ENCODE measurements at regions of chr1 and their contacts with region 1.

Region 1: DNA sequence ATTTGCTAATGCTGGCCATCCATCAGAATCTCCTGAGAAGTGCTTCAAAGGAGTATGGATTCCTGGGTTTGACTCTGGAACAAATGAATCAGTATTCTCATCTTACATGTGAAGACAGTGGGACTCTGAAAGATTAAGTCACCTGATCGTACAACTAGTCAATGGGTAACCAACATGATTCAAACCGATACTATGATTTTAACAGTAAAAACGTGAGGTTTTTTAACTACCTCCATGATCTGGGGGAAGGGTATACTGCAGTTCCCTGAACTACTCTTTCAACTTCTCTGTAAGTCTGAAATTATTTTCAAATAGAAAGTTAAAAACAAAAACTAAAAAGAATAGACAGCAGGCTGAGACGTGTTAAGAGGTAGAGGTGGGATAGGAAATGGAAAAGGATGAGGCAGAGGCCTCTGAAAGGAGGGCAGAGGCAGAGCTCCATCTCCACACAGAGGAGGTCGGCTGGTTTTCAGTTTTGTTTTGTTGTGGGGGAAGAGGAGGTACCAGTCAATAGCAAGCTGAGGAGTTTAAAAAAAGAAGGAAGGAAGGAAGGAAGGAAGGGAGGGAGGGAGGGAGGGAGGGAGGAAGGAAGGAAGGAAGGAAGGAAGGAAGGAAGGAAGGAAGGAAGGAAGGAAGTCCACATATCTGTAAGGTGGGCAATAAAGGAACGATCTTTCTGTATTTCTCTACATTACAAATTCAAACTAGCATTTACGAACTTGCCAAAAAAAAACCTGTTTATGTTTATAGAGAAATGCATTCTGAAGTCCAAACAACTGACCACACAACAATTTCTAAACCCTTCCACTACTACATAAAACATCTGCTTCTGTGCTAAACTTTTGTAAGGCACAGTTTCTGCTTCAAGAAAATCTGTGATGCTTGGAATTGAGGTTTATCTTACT is 213.1 kb downstream of the RERE start:
- DNase-seq: peak; percentile 76
- ATAC-seq: peak; percentile 85
- H3K4me3 Mint-ChIP-seq: peak overlapping the region; percentile 70
- H3K27ac Mint-ChIP-seq: peak overlapping the region; percentile 95
- H3K4me1 Mint-ChIP-seq: peaks cover 40% of the 10 kb centered on the region
- H3K27me3 Mint-ChIP-seq: no peaks in the 10 kb centered on the region

Region 2: GRCh38 chr1:8560611-8561544 is 43.4 kb before region 1 on chr1:
- CTCF ChIA-PET with region 1: interaction called, 10 read pairs
- DNase-seq: no peak
- ATAC-seq: peak; percentile 80
- H3K4me3 Mint-ChIP-seq: no peak overlapping the region
- H3K27ac Mint-ChIP-seq: peak overlapping the region; percentile 12
- H3K4me1 Mint-ChIP-seq: peaks cover 17% of the 10 kb centered on the region
- H3K27me3 Mint-ChIP-seq: no peaks in the 10 kb centered on the region

Measured in activated CD8-positive, alpha-beta memory T cell treated with anti-CD3 and anti-CD28 coated beads, Interleukin-2, amount 10 ng/mL, durations not matched to agents 7 days and 5 days (primary cell).